Aorta (tissue), 5 donors: ENCODE measurements at regions of chr3 and their contacts with region 1.

Region 1: DNA sequence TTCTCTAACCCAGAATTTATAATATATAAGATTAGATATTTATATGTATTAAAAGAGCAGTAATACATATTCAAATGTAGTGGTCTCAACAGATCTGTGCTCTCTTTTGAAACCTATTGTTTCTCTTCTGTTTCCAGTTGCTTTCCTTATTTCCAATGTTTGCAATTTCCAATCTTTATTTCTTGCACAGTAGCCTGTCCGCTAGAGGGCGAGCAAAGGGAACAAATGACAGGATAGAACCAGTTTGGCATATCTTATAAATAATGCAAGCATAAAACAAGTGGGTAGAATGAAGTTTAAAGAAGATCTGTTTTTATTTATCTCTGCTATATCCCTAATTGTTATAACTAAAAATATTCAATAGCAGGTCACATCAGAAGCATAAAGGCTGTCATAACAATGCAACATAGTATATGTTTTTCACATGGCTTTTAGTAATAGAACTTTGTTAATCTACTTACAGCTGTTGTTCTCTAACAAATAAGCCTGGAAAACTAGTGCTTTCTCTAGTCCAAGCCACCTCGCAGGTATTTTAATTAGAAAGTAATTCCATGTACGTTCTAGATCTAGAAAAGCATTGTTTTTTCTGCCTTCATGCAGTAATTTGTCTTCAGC is 15.1 kb upstream of the TCAIM start:
- DNase-seq: peak; percentile 63 to 77
- ATAC-seq: peak; percentile 78
- H3K4me3 ChIP-seq: no peak overlapping the region
- H3K27ac ChIP-seq: no peak overlapping the region
- H3K4me1 ChIP-seq: peaks cover 0 to 1% of the 10 kb centered on the region in 2 donors
- H3K27me3 ChIP-seq: no peaks in the 10 kb centered on the region

Region 2: DNA sequence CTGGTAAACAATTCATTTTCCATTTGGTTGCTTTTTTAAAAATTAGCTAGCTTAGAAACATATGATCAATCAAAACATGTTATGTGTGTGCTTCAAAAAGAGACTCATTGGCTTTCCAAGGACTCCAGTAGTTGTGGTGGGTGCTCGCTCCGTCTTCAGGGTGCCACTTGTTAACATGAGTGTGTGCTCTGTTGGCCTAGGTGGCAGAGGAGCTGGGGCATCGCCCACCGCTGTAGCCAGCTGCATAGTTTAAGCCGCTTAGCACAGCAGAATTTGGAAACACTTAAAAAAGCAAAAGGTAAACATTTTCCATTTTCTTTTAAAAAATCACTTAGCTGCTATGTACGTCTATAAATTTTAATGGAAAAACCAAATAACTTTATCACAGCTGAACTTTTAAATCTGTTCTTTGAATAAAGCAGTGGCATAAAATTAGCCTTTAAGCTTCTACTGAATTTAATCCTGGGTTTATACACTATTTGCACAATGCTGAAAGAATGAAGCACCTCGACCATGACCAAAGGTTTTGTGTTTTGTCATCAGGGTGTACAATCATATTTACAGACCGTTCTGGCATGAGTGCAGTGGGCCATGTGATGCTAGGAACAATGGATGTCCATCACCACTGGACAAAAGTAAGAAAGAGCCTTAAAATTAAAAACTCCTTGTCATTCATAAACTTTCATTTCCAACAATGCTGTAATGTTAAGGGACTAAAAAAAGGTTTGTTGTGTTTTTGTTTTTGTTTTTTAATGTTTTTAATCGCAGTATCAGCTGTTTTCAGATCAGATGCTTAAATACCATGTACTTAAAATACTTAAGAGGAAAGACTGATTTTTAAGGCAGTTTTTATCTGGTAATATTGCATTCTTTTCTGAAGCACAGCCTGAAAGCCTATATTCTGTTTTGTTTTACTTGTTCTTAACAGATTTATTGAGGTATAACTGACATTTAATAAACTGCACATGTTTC is 73.0 kb after region 1 on chr3:
- intact Hi-C with region 1: loop called in 1 of 2 experiments (anchors 10 kb)
- DNase-seq: no peak
- ATAC-seq: no peak
- H3K4me3 ChIP-seq: no peak overlapping the region
- H3K27ac ChIP-seq: no peak overlapping the region
- H3K4me1 ChIP-seq: no peaks in the 10 kb centered on the region
- H3K27me3 ChIP-seq: no peaks in the 10 kb centered on the region

Region 3: DNA sequence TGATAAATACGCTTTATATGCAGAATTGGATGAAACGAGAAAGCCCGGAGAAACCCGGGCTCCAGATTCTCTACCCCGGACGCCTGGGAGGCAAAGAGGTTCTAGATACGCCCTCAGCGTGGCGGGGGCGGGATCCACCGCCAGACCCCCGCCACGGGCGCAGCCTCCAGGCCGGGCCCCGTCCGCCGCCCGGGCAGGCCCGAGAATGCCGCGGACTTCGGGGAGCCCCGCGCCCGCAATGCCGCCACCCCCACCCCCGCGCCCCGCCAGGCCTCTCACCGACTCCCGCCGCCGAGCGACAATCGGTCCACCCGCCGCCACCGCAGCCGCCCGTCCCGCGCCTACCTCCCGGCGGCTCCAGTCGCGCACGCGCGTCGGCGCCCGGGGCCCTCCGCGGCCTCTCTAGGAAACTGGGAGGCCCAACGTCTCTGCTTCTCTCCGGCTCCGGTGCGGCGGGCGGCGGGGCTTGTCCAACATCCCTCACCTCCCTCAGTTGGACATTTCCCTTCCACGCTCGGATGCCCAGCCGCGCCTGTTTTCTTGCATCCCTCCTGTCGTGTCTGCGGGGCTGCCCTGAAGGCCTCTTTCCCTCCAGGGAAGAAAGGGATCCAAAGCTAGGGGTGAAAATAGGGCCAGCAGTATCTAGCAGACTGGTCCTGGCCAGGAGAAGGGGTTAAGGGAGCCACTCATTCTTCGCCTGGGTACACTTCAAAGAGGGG is 154.0 kb after region 1 on chr3 and contains the start of gene ZNF445:
- intact Hi-C with region 1: loop called in 1 of 2 experiments (anchors 10 kb)
- DNase-seq: peak; percentile 87 to 94
- ATAC-seq: peak; percentile 96
- H3K4me3 ChIP-seq: peak within 1 kb of the TSS; percentile 84 to 100
- H3K27ac ChIP-seq: no peak within 1 kb of the TSS
- H3K4me1 ChIP-seq: peaks cover 0 to 6% of the 10 kb centered on the region in 2 donors
- H3K27me3 ChIP-seq: no peaks in the 10 kb centered on the region
- total RNA-seq, gene ZNF445: 18.6 to 26.4 TPM

Region 4: GRCh38 chr3:44510000-44510368 is 186.5 kb after region 1 on chr3:
- intact Hi-C with region 1: loop called in 1 of 2 experiments (anchors 5 kb)
- DNase-seq: no peak
- ATAC-seq: no peak
- H3K4me3 ChIP-seq: peak overlapping the region; percentile 86 to 100
- H3K27ac ChIP-seq: peak overlapping the region in 1 of 2 donors; percentile 79
- H3K4me1 ChIP-seq: no peaks in the 10 kb centered on the region
- H3K27me3 ChIP-seq: no peaks in the 10 kb centered on the region